Activated T-helper 1 cell treated with anti-CD3 and anti-CD28 coated beads, Interleukin-12 subunit alpha, Interleukin-12 subunit beta, Interleukin-2, Interleukin-4 antibody, amounts not matched to agents 30 ng/mL and 10 ng/mL and 1 ng/mL, durations not matched to agents 14 hours and 24 hours and 36 hours (primary cell): ENCODE measurements at regions of chr20 and their contacts with region 1.

Region 1: GRCh38 chr20:58818585-58819285 is 32.0 kb downstream of the GNAS-AS1 start:
- DNase-seq: peak; percentile 55
- H3K4me3 Mint-ChIP-seq: peak overlapping the region; percentile 20
- H3K27ac Mint-ChIP-seq: peak overlapping the region; percentile 53
- H3K4me1 Mint-ChIP-seq: peaks cover 16% of the 10 kb centered on the region
- H3K27me3 Mint-ChIP-seq: peaks cover 41% of the 10 kb centered on the region

Region 2: DNA sequence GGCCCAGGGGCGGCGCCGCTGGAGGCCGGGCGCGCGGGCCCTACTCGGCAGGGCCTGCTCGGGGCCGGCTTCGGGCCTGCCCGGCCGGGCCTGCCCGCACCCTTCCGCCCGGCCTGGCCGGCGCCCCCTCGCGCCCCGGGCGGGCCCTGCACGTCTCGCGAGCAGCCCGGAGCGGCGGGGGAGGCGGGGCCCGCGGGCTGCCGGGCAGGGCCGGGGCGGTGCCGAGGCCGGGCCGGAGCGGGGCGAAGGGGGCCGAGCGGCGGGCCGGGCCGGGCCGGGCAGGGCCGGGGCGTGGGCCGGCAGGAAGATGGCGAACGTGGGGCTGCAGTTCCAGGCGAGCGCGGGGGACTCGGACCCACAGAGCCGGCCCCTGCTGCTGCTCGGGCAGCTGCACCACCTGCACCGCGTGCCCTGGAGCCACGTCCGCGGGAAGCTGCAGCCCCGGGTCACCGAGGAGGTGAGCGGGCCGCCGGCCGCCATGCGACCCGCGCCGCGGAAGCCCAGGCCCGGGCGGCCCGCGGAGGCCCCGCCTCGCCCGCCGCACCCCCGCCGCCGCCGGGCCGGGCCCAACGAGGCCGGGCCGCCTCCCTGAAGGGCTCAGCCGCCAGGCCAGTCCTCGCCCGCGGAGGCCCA is 126.0 kb before region 1 on chr20 and contains the start of gene NPEPL1:
- intact Hi-C with region 1: loop called (anchors 5 kb)
- DNase-seq: peak; percentile 62
- H3K4me3 Mint-ChIP-seq: peak within 1 kb of the TSS; percentile 82
- H3K27ac Mint-ChIP-seq: peak within 1 kb of the TSS; percentile 81
- H3K4me1 Mint-ChIP-seq: peaks cover 10% of the 10 kb centered on the region
- H3K27me3 Mint-ChIP-seq: no peaks in the 10 kb centered on the region
- total RNA-seq, gene NPEPL1: 20.6 and 22.9 TPM in 2 replicates

Region 3: GRCh38 chr20:58850693-58851174 is 32.0 kb after region 1 on chr20 and contains the start of gene GNAS-AS1:
- intact Hi-C with region 1: loop called (anchors 1 kb)
- DNase-seq: peak; percentile 75
- H3K4me3 Mint-ChIP-seq: peak within 1 kb of the TSS; percentile 87
- H3K27ac Mint-ChIP-seq: no peak within 1 kb of the TSS
- H3K4me1 Mint-ChIP-seq: peaks cover 38% of the 10 kb centered on the region
- H3K27me3 Mint-ChIP-seq: peaks cover 50% of the 10 kb centered on the region
- total RNA-seq, gene GNAS-AS1: 1.4 and 1.7 TPM in 2 replicates

Region 4: GRCh38 chr20:59159493-59160376 is 341.0 kb after region 1 on chr20:
- intact Hi-C with region 1: loop called (anchors 5 kb)
- DNase-seq: peak; percentile 52
- H3K4me3 Mint-ChIP-seq: peak overlapping the region; percentile 78
- H3K27ac Mint-ChIP-seq: peak overlapping the region; percentile 92
- H3K4me1 Mint-ChIP-seq: peaks cover 80% of the 10 kb centered on the region
- H3K27me3 Mint-ChIP-seq: no peaks in the 10 kb centered on the region